Heart left ventricle (tissue), 16 donors: ENCODE measurements at regions of chr12 and their contacts with region 1.

Region 1: DNA sequence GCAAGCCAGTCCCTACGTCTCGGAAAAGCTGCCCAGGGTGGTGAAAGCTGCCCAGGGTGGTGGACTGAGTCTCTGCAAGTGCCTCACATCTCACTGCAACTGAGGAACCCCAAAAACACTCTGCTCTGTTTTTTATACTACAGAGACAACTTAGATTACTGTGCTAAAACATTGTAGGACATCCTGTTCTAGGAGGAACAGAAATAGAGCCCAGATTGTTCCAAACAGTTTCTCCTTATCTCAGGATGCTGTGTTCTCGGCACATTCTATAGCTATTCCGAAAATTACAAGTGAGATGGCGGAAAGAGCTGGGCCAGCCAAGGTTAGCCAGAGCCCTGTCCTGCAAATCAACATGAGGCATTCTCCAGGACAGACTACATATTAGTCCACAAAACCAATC is 138.7 kb downstream of the LRIG3 start:
- DNase-seq: no peak
- ATAC-seq: peak in 3 of 4 donors; percentile 38 to 68 (median 62)
- H3K4me3 ChIP-seq: peak overlapping the region in 4 of 12 donors; percentile 1 to 17 (median 4)
- H3K27ac ChIP-seq: no peak overlapping the region
- H3K4me1 ChIP-seq: no peaks in the 10 kb centered on the region
- H3K27me3 ChIP-seq: no peaks in the 10 kb centered on the region
- CTCF ChIP-seq: no peak
- POLR2A ChIP-seq: no peak

Region 2: DNA sequence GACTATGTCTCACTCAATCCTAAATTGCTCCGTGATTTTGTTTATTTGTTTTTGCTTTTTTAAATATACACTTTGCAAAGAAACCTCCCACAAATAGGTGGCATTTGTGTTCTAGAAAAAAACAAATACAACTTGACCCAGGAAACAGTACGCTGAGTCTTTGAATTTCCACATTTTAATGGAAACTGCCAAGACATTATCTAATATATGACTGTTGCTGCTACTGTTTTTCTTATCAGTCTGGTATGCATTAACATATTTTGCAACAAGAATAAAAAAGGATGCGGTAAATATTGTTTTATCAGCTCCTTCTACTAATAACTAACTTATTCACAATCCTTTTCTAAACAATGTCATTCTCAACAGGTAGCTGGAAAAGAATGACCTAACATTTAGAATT is 48.7 kb before region 1 on chr12:
- intact Hi-C with region 1: no loop called
- DNase-seq: no peak
- ATAC-seq: no peak
- H3K4me3 ChIP-seq: no peak overlapping the region
- H3K27ac ChIP-seq: no peak overlapping the region
- H3K4me1 ChIP-seq: no peaks in the 10 kb centered on the region
- H3K27me3 ChIP-seq: no peaks in the 10 kb centered on the region
- CTCF ChIP-seq: no peak
- POLR2A ChIP-seq: no peak

Region 3: DNA sequence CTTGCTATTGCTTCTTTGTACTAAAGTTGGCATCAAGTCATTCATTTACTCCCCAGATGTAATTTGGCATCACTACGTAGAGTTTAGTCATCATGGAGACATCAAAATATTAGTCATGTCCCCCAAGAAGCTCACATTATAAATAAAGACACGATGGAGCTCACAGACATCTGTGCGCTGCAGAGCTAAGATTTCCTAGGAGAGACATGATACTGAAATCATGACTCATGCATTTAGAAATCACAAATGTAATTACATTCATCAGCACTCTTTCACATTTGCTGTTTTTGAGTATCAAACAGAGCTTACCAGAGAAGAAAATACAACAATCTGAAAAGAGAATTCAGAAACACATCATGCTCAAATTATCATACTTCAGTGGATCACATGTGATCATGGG is 31.1 kb before region 1 on chr12:
- intact Hi-C with region 1: loop called in 1 of 10 experiments (anchors 2 kb)
- DNase-seq: no peak
- ATAC-seq: peak in 1 of 4 donors; percentile 69
- H3K4me3 ChIP-seq: no peak overlapping the region
- H3K27ac ChIP-seq: no peak overlapping the region
- H3K4me1 ChIP-seq: peaks cover 0 to 4% (median 0%) of the 10 kb centered on the region in 12 donors
- H3K27me3 ChIP-seq: no peaks in the 10 kb centered on the region
- CTCF ChIP-seq: no peak
- POLR2A ChIP-seq: no peak

Region 4: GRCh38 chr12:58814036-58814435 is 32.4 kb after region 1 on chr12:
- intact Hi-C with region 1: no loop called
- DNase-seq: no peak
- ATAC-seq: no peak
- H3K4me3 ChIP-seq: no peak overlapping the region
- H3K27ac ChIP-seq: no peak overlapping the region
- H3K4me1 ChIP-seq: peaks cover 0 to 16% (median 0%) of the 10 kb centered on the region in 12 donors
- H3K27me3 ChIP-seq: no peaks in the 10 kb centered on the region
- CTCF ChIP-seq: no peak
- POLR2A ChIP-seq: no peak